BJ (cell line): ENCODE measurements at regions of chr17 and their contacts with region 1.

Region 1: GRCh38 chr17:77542551-77543490 is 402.1 kb downstream of the SEC14L1 start:
- DNase-seq: peak; percentile 24
- H3K4me3 ChIP-seq: no peak overlapping the region
- H3K27me3 ChIP-seq: peaks cover 12% of the 10 kb centered on the region
- CTCF ChIP-seq: peak; percentile 96

Region 2: GRCh38 chr17:77451245-77451893 is 91.5 kb before region 1 on chr17:
- CTCF ChIA-PET with region 1: no interaction called
- POLR2A ChIA-PET with region 1: no interaction called
- DNase-seq: no peak
- H3K4me3 ChIP-seq: peak overlapping the region; percentile 40
- H3K27me3 ChIP-seq: no peaks in the 10 kb centered on the region
- CTCF ChIP-seq: no peak

Region 3: DNA sequence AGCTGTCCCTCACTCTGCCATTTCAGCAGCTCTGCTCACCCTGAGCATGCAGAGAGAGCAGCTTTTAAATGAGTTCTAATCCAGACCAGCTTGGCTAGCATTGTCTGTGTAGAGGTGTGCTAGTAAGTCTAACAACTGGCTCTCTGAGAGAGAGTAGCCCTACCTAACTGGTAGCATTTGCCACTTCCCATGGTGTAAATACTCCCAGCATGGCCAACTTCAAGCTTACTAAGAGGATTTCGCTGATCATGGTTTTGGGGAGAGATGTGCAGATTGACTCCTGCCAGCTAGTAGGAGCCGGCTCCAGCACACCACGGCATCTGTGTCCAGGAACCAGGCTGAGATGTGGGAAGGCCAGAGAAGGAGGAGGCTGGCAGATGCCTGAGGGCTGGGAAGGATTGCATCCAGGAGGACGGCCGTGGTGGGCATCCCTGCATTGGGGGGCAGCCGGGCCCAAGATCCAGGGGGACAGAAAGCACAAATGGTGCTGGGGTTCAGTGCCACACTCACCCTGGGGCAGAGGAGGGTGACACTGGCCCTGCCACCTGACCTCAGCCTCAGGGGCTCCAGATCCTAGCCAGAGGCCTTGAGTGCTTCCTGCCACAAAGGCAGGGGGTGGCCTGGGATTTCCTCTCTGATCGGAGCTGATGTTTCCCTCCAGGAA is 20.8 kb after region 1 on chr17:
- CTCF ChIA-PET with region 1: interaction called, 10 read pairs
- POLR2A ChIA-PET with region 1: no interaction called
- DNase-seq: no peak
- H3K4me3 ChIP-seq: no peak overlapping the region
- H3K27me3 ChIP-seq: peaks cover 11% of the 10 kb centered on the region
- CTCF ChIP-seq: no peak

Region 4: GRCh38 chr17:77649717-77650211 is 106.9 kb after region 1 on chr17:
- CTCF ChIA-PET with region 1: interaction called, 16 read pairs
- POLR2A ChIA-PET with region 1: no interaction called
- DNase-seq: no peak
- H3K4me3 ChIP-seq: no peak overlapping the region
- H3K27me3 ChIP-seq: peaks cover 3% of the 10 kb centered on the region
- CTCF ChIP-seq: no peak

Region 5: GRCh38 chr17:78013683-78014467 is 471.1 kb after region 1 on chr17:
- CTCF ChIA-PET with region 1: interaction called, 147 read pairs
- POLR2A ChIA-PET with region 1: no interaction called
- DNase-seq: no peak
- H3K4me3 ChIP-seq: no peak overlapping the region
- H3K27me3 ChIP-seq: no peaks in the 10 kb centered on the region
- CTCF ChIP-seq: peak; percentile 81